ENCODE measurements at regions of chr2 and their contacts with region 1.

Region 1: DNA sequence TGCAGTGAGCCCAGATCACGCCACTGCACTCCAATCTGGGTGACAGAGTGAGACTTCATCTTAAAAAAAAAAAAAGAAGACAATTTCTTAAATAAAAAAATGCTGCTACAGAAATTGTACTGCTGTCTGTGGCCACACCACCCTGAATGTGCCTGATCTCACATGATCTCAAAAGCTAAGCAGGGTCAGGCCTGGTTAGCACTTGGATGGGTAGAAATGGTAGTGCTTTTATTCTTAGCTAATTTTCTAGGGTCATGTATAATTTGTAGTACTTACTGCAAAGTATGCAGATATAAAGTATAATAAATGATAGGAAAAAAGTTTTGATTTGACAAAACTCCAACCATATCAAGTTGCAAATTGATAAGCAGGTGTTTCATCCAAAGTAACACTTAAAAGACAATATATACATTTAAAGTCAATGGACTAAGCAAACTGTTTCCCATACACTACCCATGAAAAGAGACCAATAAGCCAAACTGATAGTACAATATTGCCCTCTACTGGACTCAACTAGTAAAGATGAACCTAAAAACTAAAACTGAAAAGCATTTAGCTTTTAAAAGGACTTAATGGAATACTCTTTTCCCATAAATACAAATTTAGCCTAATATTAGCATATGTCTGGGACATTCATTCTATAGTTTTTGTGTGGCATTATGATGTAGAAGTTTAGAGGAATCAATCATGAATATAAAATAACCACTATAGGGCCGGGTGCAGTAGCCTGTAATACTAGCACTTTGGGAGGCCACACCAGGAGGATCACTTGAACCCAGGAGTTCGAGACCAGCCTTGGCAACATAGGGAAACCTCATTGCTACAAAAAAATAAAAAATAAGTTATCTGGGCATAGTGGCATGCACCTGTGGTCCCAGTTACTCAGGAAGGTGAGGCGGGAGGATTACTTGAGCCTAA is 18.6 kb upstream of the PEX13 start:
- DNase-seq: no peak
- ATAC-seq: peak; percentile 83
- H3K4me3 Mint-ChIP-seq: no peak overlapping the region
- H3K27ac Mint-ChIP-seq: no peak overlapping the region
- H3K4me1 Mint-ChIP-seq: peaks cover 2% of the 10 kb centered on the region
- H3K27me3 Mint-ChIP-seq: no peaks in the 10 kb centered on the region
- CTCF ChIP-seq: peak; percentile 71

Region 2: DNA sequence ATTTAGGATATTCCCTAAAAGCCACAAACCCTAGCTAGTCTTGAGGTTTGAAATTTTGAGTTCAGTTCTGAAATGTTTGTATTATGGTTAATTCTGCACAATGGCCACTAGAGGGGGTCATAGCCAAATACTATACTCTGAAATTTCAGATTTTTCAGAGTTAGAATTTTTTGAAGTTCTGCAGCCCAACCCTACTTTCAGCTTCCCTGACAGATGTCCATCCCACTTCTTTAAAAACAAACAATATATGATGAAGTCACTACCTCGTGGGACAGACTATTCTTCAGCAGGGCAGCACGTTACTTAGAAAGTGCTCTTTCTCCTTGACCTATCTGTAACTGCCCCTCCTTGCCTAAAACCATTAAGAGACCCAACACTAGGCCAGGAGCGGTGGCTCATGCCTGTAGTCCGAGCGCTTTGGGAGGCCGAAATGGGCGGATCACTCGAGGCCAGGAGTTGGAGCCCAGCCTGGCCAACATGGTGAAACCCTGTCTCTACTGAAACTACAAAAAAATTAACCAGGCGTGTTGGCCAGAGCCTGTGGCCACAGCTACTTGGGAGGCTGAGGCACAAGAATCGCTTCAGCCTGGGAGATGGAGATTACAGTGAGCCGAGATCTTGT is 291.0 kb before region 1 on chr2:
- CTCF ChIA-PET with region 1: interaction called, 98 read pairs
- POLR2A ChIA-PET with region 1: no interaction called
- intact Hi-C with region 1: loop called (anchors 2 kb)
- DNase-seq: no peak
- ATAC-seq: peak; percentile 55
- H3K4me3 Mint-ChIP-seq: no peak overlapping the region
- H3K27ac Mint-ChIP-seq: no peak overlapping the region
- H3K4me1 Mint-ChIP-seq: no peaks in the 10 kb centered on the region
- H3K27me3 Mint-ChIP-seq: no peaks in the 10 kb centered on the region
- CTCF ChIP-seq: peak; percentile 83

Region 3: GRCh38 chr2:60794277-60794863 is 204.5 kb before region 1 on chr2:
- CTCF ChIA-PET with region 1: interaction called, 26 read pairs
- POLR2A ChIA-PET with region 1: no interaction called
- intact Hi-C with region 1: no loop called
- DNase-seq: no peak
- ATAC-seq: no peak
- H3K4me3 Mint-ChIP-seq: no peak overlapping the region
- H3K27ac Mint-ChIP-seq: no peak overlapping the region
- H3K4me1 Mint-ChIP-seq: peaks cover 18% of the 10 kb centered on the region
- H3K27me3 Mint-ChIP-seq: no peaks in the 10 kb centered on the region
- CTCF ChIP-seq: peak; percentile 84

Region 4: DNA sequence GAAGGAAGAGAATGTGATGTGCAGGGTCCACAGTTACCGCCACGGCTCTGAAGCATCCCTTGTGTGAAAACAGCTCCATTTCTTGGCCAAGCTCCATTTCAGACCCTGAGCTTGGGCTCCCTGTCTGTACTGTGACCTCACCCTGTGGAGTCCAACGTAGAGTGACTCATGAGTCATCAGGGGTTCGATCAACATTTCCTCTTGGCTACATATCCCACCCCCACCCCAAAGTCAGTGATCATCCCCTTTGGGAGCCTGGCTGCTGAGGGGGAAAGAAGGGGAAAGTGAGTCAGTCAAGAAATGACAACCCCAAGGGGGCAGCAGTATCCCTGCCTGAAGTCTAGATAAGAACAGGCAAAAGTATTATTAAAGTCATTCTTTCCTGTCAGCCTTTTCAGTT is 180.6 kb before region 1 on chr2:
- CTCF ChIA-PET with region 1: interaction called, 28 read pairs
- POLR2A ChIA-PET with region 1: interaction called, 3 read pairs
- intact Hi-C with region 1: no loop called
- DNase-seq: peak; percentile 85
- ATAC-seq: peak; percentile 44
- H3K4me3 Mint-ChIP-seq: peak overlapping the region; percentile 36
- H3K27ac Mint-ChIP-seq: peak overlapping the region; percentile 99
- H3K4me1 Mint-ChIP-seq: peaks cover 50% of the 10 kb centered on the region
- H3K27me3 Mint-ChIP-seq: no peaks in the 10 kb centered on the region
- CTCF ChIP-seq: peak; percentile 42

Region 5: DNA sequence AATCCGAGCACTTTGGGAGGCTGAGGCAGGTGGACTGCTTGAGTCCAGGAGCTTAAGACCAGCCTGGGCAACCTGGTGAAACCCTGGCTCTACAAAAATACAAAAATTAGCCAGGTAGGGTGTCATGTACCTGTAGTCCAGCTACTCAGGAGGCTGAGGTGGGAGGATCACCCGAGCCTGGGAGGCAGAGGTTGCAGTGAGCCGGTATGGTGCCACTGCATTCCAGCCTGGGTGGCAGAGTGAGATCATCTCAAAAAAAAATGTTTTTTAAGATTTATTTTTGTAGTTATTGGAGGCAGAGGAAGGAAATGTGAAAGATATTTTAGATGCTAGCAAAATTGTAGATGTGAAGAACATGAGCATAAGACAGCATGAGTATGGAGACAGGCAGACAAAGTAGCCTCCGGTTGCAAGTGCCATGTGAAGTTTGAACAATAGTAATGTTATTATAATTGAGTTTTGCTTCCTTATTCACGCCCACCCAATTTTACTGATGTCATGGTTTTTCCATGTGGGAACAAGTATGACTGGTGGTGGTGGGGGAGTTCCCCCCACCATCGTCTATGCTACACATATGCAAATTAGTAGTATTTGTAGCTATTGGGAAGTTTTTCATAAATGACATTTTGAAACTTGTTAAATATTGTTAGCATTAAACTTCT is 99.5 kb before region 1 on chr2:
- CTCF ChIA-PET with region 1: interaction called, 11 read pairs
- POLR2A ChIA-PET with region 1: no interaction called
- intact Hi-C with region 1: no loop called
- DNase-seq: peak; percentile 82
- ATAC-seq: peak; percentile 82
- H3K4me3 Mint-ChIP-seq: peak overlapping the region; percentile 56
- H3K27ac Mint-ChIP-seq: peak overlapping the region; percentile 94
- H3K4me1 Mint-ChIP-seq: peaks cover 56% of the 10 kb centered on the region
- H3K27me3 Mint-ChIP-seq: no peaks in the 10 kb centered on the region
- CTCF ChIP-seq: no peak

Region 6: GRCh38 chr2:60936757-60937156 is 62.1 kb before region 1 on chr2:
- CTCF ChIA-PET with region 1: interaction called, 17 read pairs
- POLR2A ChIA-PET with region 1: no interaction called
- intact Hi-C with region 1: no loop called
- DNase-seq: no peak
- ATAC-seq: no peak
- H3K4me3 Mint-ChIP-seq: no peak overlapping the region
- H3K27ac Mint-ChIP-seq: no peak overlapping the region
- H3K4me1 Mint-ChIP-seq: peaks cover 28% of the 10 kb centered on the region
- H3K27me3 Mint-ChIP-seq: no peaks in the 10 kb centered on the region
- CTCF ChIP-seq: no peak

Region 7: GRCh38 chr2:60958800-60959199 is 40.1 kb before region 1 on chr2:
- CTCF ChIA-PET with region 1: no interaction called
- POLR2A ChIA-PET with region 1: no interaction called
- intact Hi-C with region 1: no loop called
- DNase-seq: no peak
- ATAC-seq: no peak
- H3K4me3 Mint-ChIP-seq: no peak overlapping the region
- H3K27ac Mint-ChIP-seq: no peak overlapping the region
- H3K4me1 Mint-ChIP-seq: peaks cover 11% of the 10 kb centered on the region
- H3K27me3 Mint-ChIP-seq: no peaks in the 10 kb centered on the region
- CTCF ChIP-seq: no peak

Region 8: DNA sequence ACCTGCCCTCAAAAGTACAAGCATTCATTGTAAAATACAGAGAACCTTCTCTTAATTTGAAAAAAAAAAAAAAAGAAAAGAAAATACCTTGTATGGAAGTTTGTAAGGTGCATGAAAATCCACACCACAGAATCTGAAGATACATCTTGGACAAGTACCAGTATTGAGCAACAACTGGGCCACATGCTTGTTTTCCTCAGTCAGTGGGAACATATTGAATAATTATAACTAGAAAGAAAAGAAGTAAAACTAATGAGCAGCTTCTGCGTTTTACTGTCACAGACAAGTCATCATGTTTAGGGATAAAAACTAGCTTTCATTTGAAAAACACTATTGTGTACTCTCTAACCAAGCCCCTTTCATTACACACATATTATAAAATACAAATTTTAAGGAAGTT is 12.8 kb after region 1 on chr2:
- CTCF ChIA-PET with region 1: interaction called, 35 read pairs
- POLR2A ChIA-PET with region 1: interaction called, 3 read pairs
- intact Hi-C with region 1: no loop called
- DNase-seq: no peak
- ATAC-seq: no peak
- H3K4me3 Mint-ChIP-seq: no peak overlapping the region
- H3K27ac Mint-ChIP-seq: no peak overlapping the region
- H3K4me1 Mint-ChIP-seq: peaks cover 25% of the 10 kb centered on the region
- H3K27me3 Mint-ChIP-seq: no peaks in the 10 kb centered on the region
- CTCF ChIP-seq: no peak

Region 9: GRCh38 chr2:61272421-61273070 is 273.7 kb after region 1 on chr2:
- CTCF ChIA-PET with region 1: no interaction called
- POLR2A ChIA-PET with region 1: no interaction called
- intact Hi-C with region 1: no loop called
- DNase-seq: no peak
- ATAC-seq: no peak
- H3K4me3 Mint-ChIP-seq: no peak overlapping the region
- H3K27ac Mint-ChIP-seq: peak overlapping the region; percentile 28
- H3K4me1 Mint-ChIP-seq: peaks cover 6% of the 10 kb centered on the region
- H3K27me3 Mint-ChIP-seq: no peaks in the 10 kb centered on the region
- CTCF ChIP-seq: no peak